Mammary epithelial cell (primary cell): ENCODE measurements at regions of chr7 and their contacts with region 1.

Region 1: DNA sequence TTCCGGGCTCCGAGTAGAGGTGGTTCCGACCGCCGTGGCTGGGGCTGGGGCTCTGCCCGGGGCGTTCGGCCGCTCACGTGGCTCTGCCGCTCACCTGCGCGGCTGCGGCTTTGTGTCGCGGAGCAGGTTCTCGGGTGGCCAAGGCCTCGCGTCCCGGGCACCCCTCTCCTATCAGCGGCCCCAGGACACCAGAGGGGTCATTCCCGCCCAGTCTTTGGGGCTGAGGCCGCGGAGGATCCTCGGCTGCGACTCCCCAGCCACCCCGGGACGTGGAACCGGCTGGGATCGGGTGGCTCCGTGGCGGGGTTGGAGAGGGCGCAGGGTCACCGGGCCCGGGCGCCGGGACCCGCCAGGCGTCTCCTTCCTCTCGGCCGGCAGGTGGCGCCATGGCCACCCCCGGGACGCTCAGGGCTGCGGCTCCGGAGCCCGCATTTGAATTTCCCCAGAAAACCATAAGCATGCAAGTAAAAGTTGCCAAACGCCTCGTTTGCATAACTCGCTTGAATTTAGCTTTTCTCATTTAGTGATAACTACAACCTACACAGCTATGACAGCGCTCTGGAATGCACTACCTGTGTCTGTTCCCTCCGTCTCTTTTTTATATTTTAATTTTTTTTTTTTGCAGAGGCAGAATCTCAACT is 1.2 kb downstream of the COL26A1 start:
- DNase-seq: peak; percentile 42
- H3K4me3 ChIP-seq: peak overlapping the region; percentile 36 to 47 (median 45)
- H3K27ac ChIP-seq: no peak overlapping the region
- H3K4me1 ChIP-seq: peaks cover 6% of the 10 kb centered on the region
- H3K27me3 ChIP-seq: peaks cover 9% of the 10 kb centered on the region
- CTCF ChIP-seq: peak; percentile 46 to 92

Region 2: DNA sequence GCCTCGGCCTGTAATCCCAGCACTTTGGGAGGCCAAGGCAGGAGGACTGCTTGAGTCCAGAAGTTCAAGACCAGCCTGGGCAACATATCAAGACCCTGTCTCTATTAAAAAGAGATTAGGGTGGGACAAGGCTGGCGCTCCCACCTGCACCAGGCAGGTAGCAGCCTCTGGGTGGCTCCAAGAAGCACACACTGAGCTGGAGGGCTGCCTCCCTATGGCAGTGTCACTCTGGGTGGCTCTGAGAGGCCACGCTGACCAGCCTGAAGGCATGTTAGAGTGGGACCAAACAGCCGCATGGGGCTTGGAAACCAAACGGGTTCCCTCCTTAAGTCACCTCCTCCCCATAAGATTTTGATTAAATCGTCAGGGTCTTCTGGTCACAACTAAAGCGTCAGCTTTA is 21.0 kb before region 1 on chr7:
- CTCF ChIA-PET with region 1: no interaction called
- dilution Hi-C with region 1: no loop called
- in situ Hi-C with region 1: no loop called
- intact Hi-C with region 1: no loop called
- DNase-seq: no peak
- H3K4me3 ChIP-seq: no peak overlapping the region
- H3K27ac ChIP-seq: no peak overlapping the region
- H3K4me1 ChIP-seq: no peaks in the 10 kb centered on the region
- H3K27me3 ChIP-seq: no peaks in the 10 kb centered on the region
- CTCF ChIP-seq: no peak

Region 3: DNA sequence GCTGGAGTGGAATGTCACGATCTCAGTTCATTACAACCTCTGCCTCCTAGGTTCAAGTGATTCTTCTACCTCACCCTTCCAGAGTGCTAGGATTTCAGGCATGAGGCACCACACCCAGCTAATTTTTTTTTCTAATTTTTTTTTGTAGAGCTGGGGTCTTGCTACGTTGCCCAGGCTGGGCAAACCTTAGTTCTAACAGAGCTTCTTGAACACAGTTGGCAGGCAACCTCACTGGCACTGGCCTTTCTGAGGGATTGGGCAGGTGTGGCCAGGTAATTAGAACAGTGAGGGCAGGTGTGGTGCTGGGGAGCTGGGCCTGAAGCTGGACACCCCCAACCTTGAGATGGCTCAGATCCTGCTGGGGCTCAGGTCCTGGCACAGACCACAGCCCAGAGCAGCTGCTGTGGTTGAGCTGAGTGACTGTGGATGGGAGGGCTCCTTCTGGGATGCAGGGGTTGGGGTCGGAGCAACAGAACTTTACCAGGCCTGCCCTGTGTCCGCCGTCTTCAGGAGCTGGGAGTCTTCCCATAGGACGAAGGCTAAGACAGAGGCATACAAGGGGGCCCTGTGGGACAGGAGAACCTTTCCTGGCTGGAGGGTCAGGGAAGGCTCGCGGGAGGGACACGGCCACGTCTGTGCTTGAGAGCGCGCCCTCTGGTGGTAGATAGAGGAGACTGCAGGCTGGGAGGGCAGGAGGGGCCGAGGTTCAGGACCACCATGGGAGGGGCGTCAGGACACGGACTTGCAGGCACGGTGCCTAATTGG is 47.1 kb after region 1 on chr7:
- CTCF ChIA-PET with region 1: no interaction called
- dilution Hi-C with region 1: no loop called
- in situ Hi-C with region 1: no loop called
- intact Hi-C with region 1: loop called (anchors 5 kb)
- DNase-seq: no peak
- H3K4me3 ChIP-seq: no peak overlapping the region
- H3K27ac ChIP-seq: no peak overlapping the region
- H3K4me1 ChIP-seq: no peaks in the 10 kb centered on the region
- H3K27me3 ChIP-seq: no peaks in the 10 kb centered on the region
- CTCF ChIP-seq: peak; percentile 61 to 77

Region 4: DNA sequence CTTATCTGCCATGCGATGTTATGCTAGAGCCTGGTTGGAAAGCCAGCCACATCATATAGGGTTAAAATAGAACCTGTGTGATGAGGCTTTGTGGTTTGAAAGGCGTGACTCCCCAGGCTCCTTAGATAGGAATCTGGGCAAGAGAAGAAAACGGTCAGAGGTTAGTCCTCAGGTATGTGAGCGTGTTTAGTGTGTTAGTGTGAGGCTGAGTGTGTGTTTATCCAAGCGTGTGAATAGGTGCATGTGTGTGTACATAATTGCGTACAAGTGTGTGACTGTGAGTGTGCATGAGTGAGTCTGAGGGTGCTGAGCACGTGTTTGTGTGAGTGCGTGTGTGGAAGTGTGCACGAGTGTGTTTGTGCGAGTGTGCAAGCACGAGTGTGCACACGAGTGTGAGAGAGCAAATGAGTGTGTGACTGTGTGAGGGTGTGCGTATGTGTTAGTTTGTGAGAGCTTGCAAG is 78.7 kb after region 1 on chr7:
- CTCF ChIA-PET with region 1: no interaction called
- dilution Hi-C with region 1: no loop called
- in situ Hi-C with region 1: no loop called
- intact Hi-C with region 1: loop called (anchors 5 kb)
- DNase-seq: peak; percentile 21
- H3K4me3 ChIP-seq: no peak overlapping the region
- H3K27ac ChIP-seq: no peak overlapping the region
- H3K4me1 ChIP-seq: no peaks in the 10 kb centered on the region
- H3K27me3 ChIP-seq: no peaks in the 10 kb centered on the region
- CTCF ChIP-seq: no peak

Region 5: DNA sequence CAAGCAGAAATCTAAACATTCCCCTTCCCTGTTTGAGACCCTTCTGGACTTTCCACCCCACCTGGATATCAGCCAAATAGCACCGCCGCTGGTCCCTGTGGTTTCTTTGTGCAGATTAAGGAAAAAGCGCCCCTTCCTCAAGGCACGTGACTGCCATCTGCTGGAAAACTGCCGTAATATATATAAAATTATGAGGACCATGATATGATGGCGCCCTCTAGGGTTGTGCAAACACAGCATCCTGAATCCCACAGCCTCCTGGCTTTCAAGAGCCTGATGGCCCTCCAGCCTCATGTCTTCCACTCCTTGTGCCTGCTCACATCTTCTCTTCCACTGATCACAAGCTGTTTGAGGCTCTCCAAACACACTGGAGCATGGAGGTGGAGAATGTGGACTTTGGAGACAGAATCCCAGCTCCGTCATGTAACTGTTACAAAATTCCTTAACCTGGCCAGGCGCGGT is 144.0 kb after region 1 on chr7:
- CTCF ChIA-PET with region 1: no interaction called
- dilution Hi-C with region 1: no loop called
- in situ Hi-C with region 1: no loop called
- intact Hi-C with region 1: loop called (anchors 5 kb)
- DNase-seq: peak; percentile 9
- H3K4me3 ChIP-seq: no peak overlapping the region
- H3K27ac ChIP-seq: no peak overlapping the region
- H3K4me1 ChIP-seq: no peaks in the 10 kb centered on the region
- H3K27me3 ChIP-seq: no peaks in the 10 kb centered on the region
- CTCF ChIP-seq: peak; percentile 53 to 54